ENCODE measurements at regions of chr22 and their contacts with region 1.

Region 1: GRCh38 chr22:26461188-26461810 is 22.3 kb downstream of the HPS4 start:
- DNase-seq: no peak

Region 2: DNA sequence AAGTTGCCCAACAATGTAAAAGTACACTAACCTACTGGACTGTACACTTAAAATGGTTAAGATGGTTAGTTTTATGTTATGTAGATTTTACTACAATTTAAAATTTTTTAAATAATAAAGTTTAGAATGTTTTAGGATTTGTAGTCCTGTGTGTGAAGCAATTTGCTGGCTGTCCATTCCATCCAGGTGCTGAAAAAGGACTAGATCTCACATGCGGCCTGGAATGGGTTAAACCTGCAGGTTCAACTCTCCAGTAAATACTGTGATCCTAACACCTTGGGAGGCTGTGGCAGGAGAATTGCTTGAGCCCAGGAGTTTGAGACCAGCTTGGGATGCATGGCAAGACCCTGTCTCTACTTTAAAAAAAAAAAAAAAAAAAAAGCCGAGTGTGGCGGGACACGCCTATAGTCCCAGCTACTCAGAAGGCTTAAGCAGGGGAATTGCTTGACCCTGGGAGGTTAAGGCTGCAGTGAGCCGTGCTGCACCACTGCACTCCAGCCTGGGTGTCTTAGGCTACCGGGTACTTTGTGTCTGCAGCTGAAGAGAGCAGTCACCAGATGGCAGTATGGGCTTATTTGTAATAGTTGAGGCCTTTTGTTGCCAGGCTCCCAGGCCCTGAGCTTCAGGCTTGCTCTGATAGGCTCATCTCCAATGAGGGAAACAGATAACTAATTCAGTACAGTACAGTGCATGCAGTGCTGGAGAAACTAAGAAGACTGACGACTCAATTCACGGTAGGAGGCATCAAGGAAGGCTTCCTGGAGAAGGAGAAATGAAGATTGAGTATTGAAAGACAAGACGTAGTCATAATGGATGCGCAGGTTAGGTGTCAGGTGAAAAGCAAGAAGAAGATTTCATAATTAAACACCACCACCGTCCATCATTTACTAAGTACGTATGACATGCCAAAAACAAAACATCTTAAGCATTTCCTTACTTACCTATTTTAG is 97.0 kb before region 1 on chr22:
- intact Hi-C with region 1: loop called (anchors 5 kb)
- DNase-seq: no peak

Measured in cardiac septum (tissue), 1 donor.